CD8-positive, alpha-beta T cell (primary cell): ENCODE measurements at regions of chr9 and their contacts with region 1.

Region 1: GRCh38 chr9:78023003-78023741 is 8.4 kb downstream of the GNAQ start:
- DNase-seq: peak in 1 of 9 experiments; percentile 33
- ATAC-seq: no peak
- H3K4me3 ChIP-seq: no peak overlapping the region
- H3K4me3 Mint-ChIP-seq: no peak overlapping the region
- H3K27ac ChIP-seq: no peak overlapping the region
- H3K27ac Mint-ChIP-seq: no peak overlapping the region
- H3K4me1 ChIP-seq: peaks cover 24% of the 10 kb centered on the region
- H3K4me1 Mint-ChIP-seq: peaks cover 55% of the 10 kb centered on the region
- H3K27me3 ChIP-seq: no peaks in the 10 kb centered on the region
- H3K27me3 Mint-ChIP-seq: no peaks in the 10 kb centered on the region
- CTCF ChIP-seq: no peak

Region 2: DNA sequence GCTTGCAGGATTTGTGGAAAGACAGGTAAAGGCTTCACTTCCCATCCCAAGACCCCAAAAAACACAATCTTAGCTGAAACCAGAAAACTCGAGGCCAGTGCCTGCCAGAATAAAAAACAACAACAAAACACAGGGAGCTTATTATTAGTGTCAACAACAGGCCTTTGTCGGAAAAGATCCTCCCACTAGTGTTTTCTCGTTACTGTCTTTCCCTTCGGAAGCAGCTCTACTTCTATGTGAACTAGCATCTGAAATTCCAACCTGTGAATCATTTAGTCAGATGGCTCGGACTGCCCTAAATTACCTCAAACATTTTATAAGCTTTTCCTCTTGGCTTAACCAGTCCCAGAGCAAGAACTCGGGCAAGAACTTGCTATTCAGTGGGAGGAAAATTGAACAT is 252.8 kb before region 1 on chr9:
- CTCF ChIA-PET with region 1: no interaction called
- POLR2A ChIA-PET with region 1: no interaction called
- intact Hi-C with region 1: loop called in 1 of 2 experiments (anchors 10 kb)
- DNase-seq: no peak
- ATAC-seq: no peak
- H3K4me3 ChIP-seq: no peak overlapping the region
- H3K4me3 Mint-ChIP-seq: no peak overlapping the region
- H3K27ac ChIP-seq: no peak overlapping the region
- H3K27ac Mint-ChIP-seq: peak overlapping the region; percentile 46
- H3K4me1 ChIP-seq: no peaks in the 10 kb centered on the region
- H3K4me1 Mint-ChIP-seq: no peaks in the 10 kb centered on the region
- H3K27me3 ChIP-seq: no peaks in the 10 kb centered on the region
- H3K27me3 Mint-ChIP-seq: no peaks in the 10 kb centered on the region
- CTCF ChIP-seq: no peak

Region 3: GRCh38 chr9:78044189-78044588 is 21.0 kb after region 1 on chr9:
- CTCF ChIA-PET with region 1: no interaction called
- POLR2A ChIA-PET with region 1: no interaction called
- intact Hi-C with region 1: no loop called
- DNase-seq: no peak
- ATAC-seq: no peak
- H3K4me3 ChIP-seq: no peak overlapping the region
- H3K4me3 Mint-ChIP-seq: no peak overlapping the region
- H3K27ac ChIP-seq: no peak overlapping the region
- H3K27ac Mint-ChIP-seq: no peak overlapping the region
- H3K4me1 ChIP-seq: no peaks in the 10 kb centered on the region
- H3K4me1 Mint-ChIP-seq: no peaks in the 10 kb centered on the region
- H3K27me3 ChIP-seq: no peaks in the 10 kb centered on the region
- H3K27me3 Mint-ChIP-seq: peaks cover 7% of the 10 kb centered on the region
- CTCF ChIP-seq: no peak